Activated CD8-positive, alpha-beta T cell treated with anti-CD3 and anti-CD28 coated beads, Interleukin-2, amount 10 ng/mL, durations not matched to agents 7 days and 5 days (primary cell): ENCODE measurements at regions of chr15 and their contacts with region 1.

Region 1: DNA sequence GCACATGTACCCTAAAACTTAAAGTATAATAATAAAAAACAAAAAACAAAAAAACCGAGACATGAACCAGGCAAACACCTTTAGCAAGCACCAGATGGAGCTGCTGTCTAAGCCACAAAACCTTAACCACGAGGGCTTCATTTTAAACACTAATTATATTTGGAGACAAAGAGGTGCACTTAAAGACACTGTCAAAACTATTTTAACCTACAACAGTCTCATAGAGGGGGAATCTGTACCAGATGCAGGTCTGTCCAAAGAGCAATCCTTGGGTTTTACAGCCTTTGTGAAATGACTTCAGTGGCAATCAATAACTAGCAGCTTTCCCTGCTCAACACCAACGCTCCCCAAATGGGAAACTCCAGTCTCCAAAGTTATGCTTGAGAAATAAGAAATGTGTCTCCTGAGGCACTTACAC is 115.7 kb upstream of the TSPAN3 start:
- DNase-seq: peak; percentile 31
- ATAC-seq: no peak
- H3K4me3 Mint-ChIP-seq: no peak overlapping the region
- H3K27ac Mint-ChIP-seq: no peak overlapping the region
- H3K4me1 Mint-ChIP-seq: peaks cover 48% of the 10 kb centered on the region
- H3K27me3 Mint-ChIP-seq: no peaks in the 10 kb centered on the region

Region 2: GRCh38 chr15:77037388-77038209 is 149.0 kb before region 1 on chr15:
- CTCF ChIA-PET with region 1: no interaction called
- POLR2A ChIA-PET with region 1: no interaction called
- DNase-seq: peak; percentile 19
- ATAC-seq: peak; percentile 26
- H3K4me3 Mint-ChIP-seq: peak overlapping the region; percentile 45
- H3K27ac Mint-ChIP-seq: peak overlapping the region; percentile 80
- H3K4me1 Mint-ChIP-seq: no peaks in the 10 kb centered on the region
- H3K27me3 Mint-ChIP-seq: no peaks in the 10 kb centered on the region

Region 3: GRCh38 chr15:77160562-77161478 is 25.8 kb before region 1 on chr15:
- CTCF ChIA-PET with region 1: interaction called, 19 read pairs
- POLR2A ChIA-PET with region 1: no interaction called
- DNase-seq: no peak
- ATAC-seq: peak; percentile 57
- H3K4me3 Mint-ChIP-seq: peak overlapping the region; percentile 8
- H3K27ac Mint-ChIP-seq: peak overlapping the region; percentile 47
- H3K4me1 Mint-ChIP-seq: peaks cover 38% of the 10 kb centered on the region
- H3K27me3 Mint-ChIP-seq: no peaks in the 10 kb centered on the region

Region 4: GRCh38 chr15:77266708-77267386 is 80.2 kb after region 1 on chr15:
- CTCF ChIA-PET with region 1: no interaction called
- POLR2A ChIA-PET with region 1: no interaction called
- DNase-seq: no peak
- ATAC-seq: no peak
- H3K4me3 Mint-ChIP-seq: no peak overlapping the region
- H3K27ac Mint-ChIP-seq: no peak overlapping the region
- H3K4me1 Mint-ChIP-seq: no peaks in the 10 kb centered on the region
- H3K27me3 Mint-ChIP-seq: no peaks in the 10 kb centered on the region

Region 5: DNA sequence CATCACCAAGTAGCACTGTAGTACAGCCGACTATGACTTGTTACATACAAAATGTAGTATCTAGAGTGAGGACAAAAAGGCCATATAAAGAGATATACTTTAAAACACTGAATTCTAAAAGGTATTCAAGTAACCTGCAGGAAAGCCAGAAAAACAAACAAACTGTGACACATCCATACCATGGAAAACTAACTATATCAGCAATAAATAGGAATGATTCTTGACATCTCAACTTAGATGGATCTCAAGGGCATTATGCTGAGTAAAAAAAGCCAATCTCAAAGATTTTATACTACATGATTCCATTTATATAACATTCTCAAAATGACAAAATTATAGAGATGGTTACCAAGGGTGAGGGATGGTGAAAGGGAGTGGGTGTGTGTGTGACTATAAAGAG is 90.3 kb after region 1 on chr15:
- CTCF ChIA-PET with region 1: no interaction called
- POLR2A ChIA-PET with region 1: no interaction called
- DNase-seq: no peak
- ATAC-seq: no peak
- H3K4me3 Mint-ChIP-seq: no peak overlapping the region
- H3K27ac Mint-ChIP-seq: no peak overlapping the region
- H3K4me1 Mint-ChIP-seq: peaks cover 29% of the 10 kb centered on the region
- H3K27me3 Mint-ChIP-seq: no peaks in the 10 kb centered on the region

Region 6: GRCh38 chr15:77295446-77295845 is 108.8 kb after region 1 on chr15:
- CTCF ChIA-PET with region 1: no interaction called
- POLR2A ChIA-PET with region 1: no interaction called
- DNase-seq: no peak
- ATAC-seq: no peak
- H3K4me3 Mint-ChIP-seq: no peak overlapping the region
- H3K27ac Mint-ChIP-seq: no peak overlapping the region
- H3K4me1 Mint-ChIP-seq: no peaks in the 10 kb centered on the region
- H3K27me3 Mint-ChIP-seq: no peaks in the 10 kb centered on the region

Region 7: GRCh38 chr15:77419836-77420609 is 233.4 kb after region 1 on chr15 and contains the start of gene PEAK1:
- CTCF ChIA-PET with region 1: interaction called, 13 read pairs
- POLR2A ChIA-PET with region 1: interaction called, 4 read pairs
- DNase-seq: peak; percentile 100
- ATAC-seq: peak; percentile 99
- H3K4me3 Mint-ChIP-seq: peak within 1 kb of the TSS; percentile 97
- H3K27ac Mint-ChIP-seq: peak within 1 kb of the TSS; percentile 99
- H3K4me1 Mint-ChIP-seq: peaks cover 42% of the 10 kb centered on the region
- H3K27me3 Mint-ChIP-seq: no peaks in the 10 kb centered on the region
- total RNA-seq, gene PEAK1: 30.4 to 30.7 TPM

Region 8: GRCh38 chr15:77486542-77487468 is 300.2 kb after region 1 on chr15:
- CTCF ChIA-PET with region 1: interaction called, 148 read pairs
- POLR2A ChIA-PET with region 1: no interaction called
- DNase-seq: no peak
- ATAC-seq: no peak
- H3K4me3 Mint-ChIP-seq: no peak overlapping the region
- H3K27ac Mint-ChIP-seq: peak overlapping the region; percentile 4
- H3K4me1 Mint-ChIP-seq: peaks cover 14% of the 10 kb centered on the region
- H3K27me3 Mint-ChIP-seq: no peaks in the 10 kb centered on the region

Region 9: DNA sequence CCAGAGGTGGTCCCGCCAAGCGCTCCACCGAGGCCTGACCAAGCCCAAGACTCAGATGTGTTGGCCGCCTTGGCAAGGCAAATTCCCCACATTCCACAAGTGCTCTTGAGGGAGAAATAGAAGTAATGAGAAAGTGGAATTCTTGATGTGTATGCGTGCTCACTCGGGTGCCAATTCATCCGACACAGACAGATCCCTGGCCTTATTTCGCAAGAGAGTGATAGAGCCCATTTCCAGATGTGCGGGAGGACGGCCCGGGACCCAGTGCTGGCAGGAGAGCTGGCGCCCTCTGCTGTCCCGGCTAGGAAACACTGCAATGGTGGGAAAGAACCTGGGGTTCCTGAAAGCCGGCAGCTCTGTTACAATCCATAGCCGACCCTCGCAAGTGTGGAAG is 310.1 kb after region 1 on chr15:
- CTCF ChIA-PET with region 1: interaction called, 148 read pairs
- POLR2A ChIA-PET with region 1: interaction called, 3 read pairs
- DNase-seq: peak; percentile 76
- ATAC-seq: peak; percentile 86
- H3K4me3 Mint-ChIP-seq: no peak overlapping the region
- H3K27ac Mint-ChIP-seq: no peak overlapping the region
- H3K4me1 Mint-ChIP-seq: peaks cover 20% of the 10 kb centered on the region
- H3K27me3 Mint-ChIP-seq: no peaks in the 10 kb centered on the region